ENCODE measurements at regions of chr6 and their contacts with region 1.

Region 1: GRCh38 chr6:157873735-157874344 is 50.8 kb downstream of the SNX9 start:
- DNase-seq: peak; percentile 91
- ATAC-seq: peak; percentile 91
- H3K4me3 Mint-ChIP-seq: no peak overlapping the region
- H3K27ac Mint-ChIP-seq: no peak overlapping the region
- H3K4me1 Mint-ChIP-seq: peaks cover 31% of the 10 kb centered on the region
- H3K27me3 Mint-ChIP-seq: no peaks in the 10 kb centered on the region
- CTCF ChIP-seq: peak; percentile 90

Region 2: GRCh38 chr6:157732021-157732417 is 141.8 kb before region 1 on chr6:
- CTCF ChIA-PET with region 1: no interaction called
- POLR2A ChIA-PET with region 1: no interaction called
- DNase-seq: no peak
- ATAC-seq: peak; percentile 92
- H3K4me3 Mint-ChIP-seq: no peak overlapping the region
- H3K27ac Mint-ChIP-seq: no peak overlapping the region
- H3K4me1 Mint-ChIP-seq: peaks cover 14% of the 10 kb centered on the region
- H3K27me3 Mint-ChIP-seq: no peaks in the 10 kb centered on the region
- CTCF ChIP-seq: no peak

Region 3: DNA sequence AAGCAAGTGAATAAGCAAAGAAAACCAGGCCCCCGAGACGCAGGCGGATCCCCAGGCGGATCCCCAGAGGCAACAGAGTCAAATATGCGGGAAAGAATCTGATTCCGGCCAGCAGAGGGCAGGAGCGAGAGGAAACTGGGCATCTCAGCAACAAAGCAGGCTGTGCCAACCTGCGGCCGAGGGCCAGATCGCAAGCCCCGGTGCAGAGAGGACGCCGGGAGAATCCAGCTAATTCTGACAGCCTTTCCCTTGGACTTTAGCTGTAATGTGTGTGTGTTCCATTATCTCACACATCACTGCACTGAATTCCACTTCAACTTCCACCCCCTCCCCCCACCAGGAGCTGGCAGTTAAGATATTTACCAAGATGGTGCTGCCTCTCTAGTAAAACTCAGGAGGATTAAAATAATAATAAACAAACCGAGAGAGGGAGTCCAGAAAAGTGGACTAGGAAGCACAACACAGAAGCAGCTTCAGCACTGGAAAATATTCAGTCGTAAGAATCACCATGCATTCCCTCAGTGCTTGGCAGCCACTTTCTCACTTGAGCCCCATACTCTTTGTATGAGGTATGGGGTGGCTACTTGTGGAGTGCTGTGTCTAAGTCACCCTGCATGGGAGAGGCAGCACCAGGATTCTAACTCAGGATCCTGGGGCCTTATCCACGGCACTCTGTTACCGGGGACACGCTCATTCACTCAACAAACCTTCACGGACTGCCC is 117.0 kb before region 1 on chr6:
- CTCF ChIA-PET with region 1: interaction called, 59 read pairs
- POLR2A ChIA-PET with region 1: no interaction called
- DNase-seq: peak; percentile 90
- ATAC-seq: peak; percentile 92
- H3K4me3 Mint-ChIP-seq: no peak overlapping the region
- H3K27ac Mint-ChIP-seq: no peak overlapping the region
- H3K4me1 Mint-ChIP-seq: peaks cover 56% of the 10 kb centered on the region
- H3K27me3 Mint-ChIP-seq: peaks cover 18% of the 10 kb centered on the region
- CTCF ChIP-seq: peak; percentile 73

Region 4: GRCh38 chr6:157764178-157765033 is 109.4 kb before region 1 on chr6:
- CTCF ChIA-PET with region 1: interaction called, 59 read pairs
- POLR2A ChIA-PET with region 1: no interaction called
- DNase-seq: no peak
- ATAC-seq: no peak
- H3K4me3 Mint-ChIP-seq: no peak overlapping the region
- H3K27ac Mint-ChIP-seq: peak overlapping the region; percentile 90
- H3K4me1 Mint-ChIP-seq: peaks cover 69% of the 10 kb centered on the region
- H3K27me3 Mint-ChIP-seq: no peaks in the 10 kb centered on the region
- CTCF ChIP-seq: no peak

Region 5: GRCh38 chr6:157861814-157862213 is 12.0 kb before region 1 on chr6:
- CTCF ChIA-PET with region 1: interaction called, 18 read pairs
- POLR2A ChIA-PET with region 1: no interaction called
- DNase-seq: no peak
- ATAC-seq: no peak
- H3K4me3 Mint-ChIP-seq: no peak overlapping the region
- H3K27ac Mint-ChIP-seq: no peak overlapping the region
- H3K4me1 Mint-ChIP-seq: peaks cover 48% of the 10 kb centered on the region
- H3K27me3 Mint-ChIP-seq: no peaks in the 10 kb centered on the region
- CTCF ChIP-seq: no peak

Region 6: DNA sequence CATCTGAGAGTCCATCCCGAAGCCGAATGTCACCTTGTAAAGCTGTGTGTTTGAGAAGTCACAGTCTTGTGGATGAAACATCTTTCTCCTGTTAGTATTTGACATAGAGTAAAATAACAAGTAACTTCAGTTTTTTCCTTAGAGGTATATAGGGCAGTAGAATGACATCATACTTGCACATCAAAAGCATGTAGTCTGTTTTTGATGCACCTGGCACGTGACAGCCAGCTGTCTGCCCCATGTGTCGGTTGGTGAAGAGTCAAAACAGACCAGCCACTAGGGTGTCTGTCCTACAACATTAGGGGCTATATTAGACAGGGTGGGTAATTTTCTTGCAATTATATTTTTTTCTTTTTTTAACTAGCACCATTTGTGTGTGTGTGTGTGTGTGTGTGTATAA is 19.4 kb after region 1 on chr6:
- CTCF ChIA-PET with region 1: interaction called, 14 read pairs
- POLR2A ChIA-PET with region 1: interaction called, 3 read pairs
- DNase-seq: no peak
- ATAC-seq: no peak
- H3K4me3 Mint-ChIP-seq: no peak overlapping the region
- H3K27ac Mint-ChIP-seq: 0 out of 2 replicates have a peak overlapping the region, but pooled peaks have one; percentile 13
- H3K4me1 Mint-ChIP-seq: peaks cover 12% of the 10 kb centered on the region
- H3K27me3 Mint-ChIP-seq: no peaks in the 10 kb centered on the region
- CTCF ChIP-seq: no peak

Measured in WTC11 (cell line).